ENCODE measurements at regions of chr7 and their contacts with region 1.

Region 1: GRCh38 chr7:37694175-37694779 is 10.7 kb downstream of the GPR141 start:
- DNase-seq: no peak
- H3K4me3 ChIP-seq: no peak overlapping the region
- H3K27ac ChIP-seq: no peak overlapping the region
- H3K4me1 ChIP-seq: peaks cover 0 to 10% (median 6%) of the 10 kb centered on the region in 4 experiments; a peak in 5 of 7 replicates
- H3K27me3 ChIP-seq: no peaks in the 10 kb centered on the region
- CTCF ChIP-seq: peak in 2 of 3 experiments; percentile 10 to 14; a peak in 2 of 4 replicates
- EP300 ChIP-seq: no peak
- POLR2A ChIP-seq: no peak
- RAD21 ChIP-seq: peak; percentile 2 to 22; a peak in 1 of 4 replicates

Region 2: DNA sequence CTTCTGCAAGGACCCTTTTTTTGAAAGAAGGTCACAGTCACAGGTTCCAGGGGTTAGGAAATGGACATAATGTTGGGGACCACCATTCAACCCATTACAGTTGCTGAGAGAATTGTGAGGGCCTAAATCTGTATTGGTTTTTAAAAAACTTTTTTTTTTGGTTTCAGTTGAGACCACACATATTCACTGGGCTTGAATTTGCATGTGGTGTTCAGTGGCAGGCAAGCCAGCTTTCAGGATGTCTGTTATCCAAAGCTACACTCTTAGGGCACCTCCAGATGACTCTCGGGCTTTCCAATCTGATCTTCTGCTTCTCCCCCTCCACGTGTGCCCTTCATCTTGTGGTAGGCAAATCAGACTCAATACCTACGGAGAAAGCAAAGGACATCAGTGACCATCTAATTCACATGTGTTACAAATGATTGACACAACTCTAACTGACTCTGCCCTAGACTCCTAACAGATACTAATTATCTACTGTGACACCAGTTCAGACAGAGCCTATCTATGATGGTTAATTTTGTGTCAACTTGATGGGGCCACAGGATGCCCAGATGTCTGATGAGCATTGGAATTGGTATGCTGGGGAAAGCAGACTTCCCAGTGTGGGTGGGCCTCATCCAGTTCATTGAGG is 152.3 kb before region 1 on chr7:
- CTCF ChIA-PET with region 1: no interaction called
- POLR2A ChIA-PET with region 1: no interaction called
- DNase-seq: no peak
- H3K4me3 ChIP-seq: no peak overlapping the region
- H3K27ac ChIP-seq: no peak overlapping the region
- H3K4me1 ChIP-seq: no peaks in the 10 kb centered on the region; a peak in 1 of 7 replicates
- H3K27me3 ChIP-seq: no peaks in the 10 kb centered on the region
- CTCF ChIP-seq: no peak
- EP300 ChIP-seq: no peak
- POLR2A ChIP-seq: no peak
- RAD21 ChIP-seq: no peak

Region 3: DNA sequence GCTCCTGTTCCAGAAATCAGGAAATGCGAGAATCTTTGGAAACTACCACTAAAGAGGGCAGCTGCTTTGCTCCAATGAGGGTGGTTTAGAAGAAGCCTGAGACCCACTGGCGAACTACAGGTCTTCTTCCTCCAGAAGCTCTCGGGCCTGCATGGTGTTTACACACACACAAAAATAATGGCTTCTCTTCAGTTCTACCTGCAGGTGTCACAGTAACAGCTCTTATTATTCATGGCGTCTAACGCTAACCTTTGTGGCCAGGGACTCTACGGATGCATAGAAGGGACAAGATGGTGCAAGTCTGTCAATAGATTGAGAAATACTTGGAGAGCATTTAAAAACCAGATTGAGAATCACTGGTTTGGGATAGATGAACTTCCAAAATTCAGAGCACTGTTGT is 11.7 kb after region 1 on chr7:
- CTCF ChIA-PET with region 1: interaction called, 13 read pairs
- POLR2A ChIA-PET with region 1: no interaction called
- DNase-seq: no peak
- H3K4me3 ChIP-seq: no peak overlapping the region
- H3K27ac ChIP-seq: no peak overlapping the region
- H3K4me1 ChIP-seq: peaks cover 0 to 10% (median 7%) of the 10 kb centered on the region in 4 experiments; a peak in 4 of 7 replicates
- H3K27me3 ChIP-seq: no peaks in the 10 kb centered on the region
- CTCF ChIP-seq: no peak
- EP300 ChIP-seq: no peak
- POLR2A ChIP-seq: no peak
- RAD21 ChIP-seq: no peak

Measured in H1 (cell line).